ENCODE measurements at regions of chr10 and their contacts with region 1.

Region 1: DNA sequence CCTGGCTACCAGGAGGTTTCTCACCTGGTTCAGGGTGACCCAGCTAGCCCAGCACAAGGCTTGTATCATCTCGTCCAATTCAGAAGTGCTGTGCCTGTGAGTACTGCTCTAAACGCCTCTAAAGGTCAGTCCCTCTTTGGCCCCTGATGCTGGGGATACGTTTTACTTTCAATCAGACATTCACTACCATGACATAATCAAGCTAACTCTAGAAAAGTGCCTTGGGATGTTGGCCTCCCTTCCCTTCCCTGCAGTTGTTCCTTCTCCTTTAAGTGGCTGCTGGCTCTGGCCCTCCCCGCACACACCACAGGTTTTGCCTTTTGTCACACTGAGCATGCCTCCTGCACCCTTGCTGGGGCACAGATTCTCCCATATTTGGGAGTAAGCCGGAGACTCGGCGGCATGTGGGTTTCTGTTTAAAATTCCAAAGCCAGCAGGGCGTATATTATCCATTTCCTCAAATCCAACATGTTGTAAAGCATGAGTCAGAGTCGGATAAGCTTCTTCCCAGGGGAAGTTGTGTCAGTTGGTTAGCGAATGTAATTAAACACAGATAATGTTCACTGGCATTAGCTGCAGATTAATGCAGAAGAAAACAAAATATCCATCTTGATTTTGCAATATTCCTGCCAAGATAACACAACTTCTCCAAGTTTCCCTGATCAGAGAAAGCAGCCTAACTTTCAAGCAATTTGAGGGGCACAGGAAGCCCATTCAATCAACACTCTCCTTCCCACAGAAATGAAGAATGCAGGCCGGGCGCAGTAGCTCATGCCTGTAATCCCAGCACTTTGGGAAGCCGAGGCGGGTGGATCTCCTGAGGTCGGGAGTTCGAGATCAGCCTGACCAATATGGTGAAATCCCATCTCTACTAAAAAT is 31.8 kb upstream of the VCL start:
- DNase-seq: peak in 2 of 3 donors; percentile 37 to 50
- H3K4me3 ChIP-seq: no peak overlapping the region
- H3K4me3 Mint-ChIP-seq: peak overlapping the region in 1 of 2 donors; percentile 9
- H3K27ac ChIP-seq: no peak overlapping the region
- H3K27ac Mint-ChIP-seq: peak overlapping the region in 6 of 7 donors; percentile 6 to 70 (median 66)
- H3K4me1 ChIP-seq: peaks cover 27 to 48% of the 10 kb centered on the region in 2 donors
- H3K4me1 Mint-ChIP-seq: peaks cover 46% of the 10 kb centered on the region
- H3K27me3 ChIP-seq: no peaks in the 10 kb centered on the region
- H3K27me3 Mint-ChIP-seq: no peaks in the 10 kb centered on the region
- CTCF ChIP-seq: no peak

Region 2: GRCh38 chr10:73886085-73886529 is 80.0 kb before region 1 on chr10:
- intact Hi-C with region 1: no loop called
- DNase-seq: peak; percentile 73 to 85 (median 81)
- H3K4me3 ChIP-seq: no peak overlapping the region
- H3K4me3 Mint-ChIP-seq: no peak overlapping the region
- H3K27ac ChIP-seq: no peak overlapping the region
- H3K27ac Mint-ChIP-seq: peak overlapping the region in 2 of 7 donors; percentile 20 to 33
- H3K4me1 ChIP-seq: peaks cover 19 to 25% of the 10 kb centered on the region in 2 donors
- H3K4me1 Mint-ChIP-seq: peaks cover 21% of the 10 kb centered on the region
- H3K27me3 ChIP-seq: no peaks in the 10 kb centered on the region
- H3K27me3 Mint-ChIP-seq: peaks cover 0 to 2% (median 2%) of the 10 kb centered on the region in 3 donors
- CTCF ChIP-seq: peak; percentile 78

Region 3: GRCh38 chr10:74081192-74081803 is 115.2 kb after region 1 on chr10:
- intact Hi-C with region 1: loop called in 1 of 2 experiments (anchors 10 kb)
- DNase-seq: peak; percentile 19 to 42 (median 32)
- H3K4me3 ChIP-seq: no peak overlapping the region
- H3K4me3 Mint-ChIP-seq: no peak overlapping the region
- H3K27ac ChIP-seq: no peak overlapping the region
- H3K27ac Mint-ChIP-seq: peak overlapping the region in 2 of 7 donors; percentile 28 to 80
- H3K4me1 ChIP-seq: no peaks in the 10 kb centered on the region
- H3K4me1 Mint-ChIP-seq: peaks cover 17% of the 10 kb centered on the region
- H3K27me3 ChIP-seq: no peaks in the 10 kb centered on the region
- H3K27me3 Mint-ChIP-seq: no peaks in the 10 kb centered on the region
- CTCF ChIP-seq: peak; percentile 67

Measured in CD14-positive monocyte (primary cell).